ENCODE measurements at regions of chr22 and their contacts with region 1.

Region 1: DNA sequence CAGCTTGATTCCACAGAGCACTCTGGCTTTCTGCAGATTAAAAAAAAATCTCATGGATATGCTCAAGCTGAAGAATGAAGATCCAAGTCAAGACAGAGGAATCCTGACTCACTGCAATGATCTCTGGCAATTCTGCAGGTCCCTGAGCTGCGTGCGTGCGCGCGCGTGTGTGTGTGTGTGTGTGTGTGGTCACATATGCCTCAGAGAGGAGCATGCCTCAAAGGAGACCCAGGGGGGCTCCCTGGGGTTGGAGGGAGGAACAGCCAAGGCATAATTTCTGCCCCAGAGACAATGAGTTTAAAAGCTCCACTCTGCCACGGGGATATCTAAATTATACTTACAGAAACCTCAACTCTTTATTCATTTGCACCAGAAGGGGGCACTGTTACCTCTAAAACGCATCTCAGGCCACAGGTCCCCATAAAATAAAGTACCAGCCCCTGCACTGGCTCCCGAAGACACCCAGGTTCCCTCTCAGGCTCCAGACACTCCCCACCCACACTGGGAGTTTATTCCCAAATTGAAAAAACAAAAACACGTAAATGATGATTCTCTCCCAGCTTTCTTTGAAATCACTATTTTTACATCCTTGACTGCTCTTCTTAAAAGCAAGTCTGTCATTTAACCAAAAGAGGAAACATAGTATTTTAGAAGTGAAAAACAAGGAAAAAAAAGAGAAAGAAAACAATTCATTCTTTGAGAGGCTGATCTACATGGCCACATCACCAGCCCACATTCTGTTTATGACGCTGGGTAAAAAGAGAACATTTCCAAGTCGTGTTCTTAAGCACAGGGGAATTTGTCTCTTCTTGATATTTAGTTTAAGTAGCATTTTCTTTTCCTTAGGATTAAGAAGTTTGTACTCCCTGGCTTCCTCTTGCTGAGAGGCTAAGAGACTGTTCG is 401.0 kb downstream of the LARGE1 start:
- DNase-seq: peak; percentile 23
- ATAC-seq: no peak
- H3K4me3 Mint-ChIP-seq: no peak overlapping the region
- H3K27ac Mint-ChIP-seq: no peak overlapping the region
- H3K4me1 Mint-ChIP-seq: no peaks in the 10 kb centered on the region
- H3K27me3 Mint-ChIP-seq: no peaks in the 10 kb centered on the region

Region 2: GRCh38 chr22:33504941-33505625 is 14.2 kb before region 1 on chr22:
- CTCF ChIA-PET with region 1: no interaction called
- POLR2A ChIA-PET with region 1: no interaction called
- DNase-seq: no peak
- ATAC-seq: no peak
- H3K4me3 Mint-ChIP-seq: no peak overlapping the region
- H3K27ac Mint-ChIP-seq: no peak overlapping the region
- H3K4me1 Mint-ChIP-seq: no peaks in the 10 kb centered on the region
- H3K27me3 Mint-ChIP-seq: no peaks in the 10 kb centered on the region

Region 3: DNA sequence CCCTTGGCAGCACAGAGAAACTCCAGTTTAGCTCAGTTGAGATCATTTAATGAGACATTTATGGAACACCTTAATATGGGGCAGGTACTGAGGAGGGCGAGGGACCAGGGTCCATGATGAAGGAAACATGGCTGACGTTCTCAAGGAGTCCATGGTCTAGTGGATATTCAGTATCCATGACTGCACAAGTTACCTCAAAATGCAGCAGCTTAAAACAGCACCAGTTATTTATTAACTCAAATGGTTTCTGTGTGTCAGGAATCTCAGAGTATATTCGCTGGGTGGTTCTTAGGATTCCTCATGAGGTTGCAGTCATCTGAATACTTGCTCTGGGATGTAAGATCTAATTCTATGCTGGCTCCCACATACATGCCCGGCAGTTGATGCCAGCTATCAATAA is 54.2 kb after region 1 on chr22:
- CTCF ChIA-PET with region 1: interaction called, 20 read pairs
- POLR2A ChIA-PET with region 1: no interaction called
- DNase-seq: no peak
- ATAC-seq: no peak
- H3K4me3 Mint-ChIP-seq: no peak overlapping the region
- H3K27ac Mint-ChIP-seq: no peak overlapping the region
- H3K4me1 Mint-ChIP-seq: peaks cover 6% of the 10 kb centered on the region
- H3K27me3 Mint-ChIP-seq: no peaks in the 10 kb centered on the region

Region 4: DNA sequence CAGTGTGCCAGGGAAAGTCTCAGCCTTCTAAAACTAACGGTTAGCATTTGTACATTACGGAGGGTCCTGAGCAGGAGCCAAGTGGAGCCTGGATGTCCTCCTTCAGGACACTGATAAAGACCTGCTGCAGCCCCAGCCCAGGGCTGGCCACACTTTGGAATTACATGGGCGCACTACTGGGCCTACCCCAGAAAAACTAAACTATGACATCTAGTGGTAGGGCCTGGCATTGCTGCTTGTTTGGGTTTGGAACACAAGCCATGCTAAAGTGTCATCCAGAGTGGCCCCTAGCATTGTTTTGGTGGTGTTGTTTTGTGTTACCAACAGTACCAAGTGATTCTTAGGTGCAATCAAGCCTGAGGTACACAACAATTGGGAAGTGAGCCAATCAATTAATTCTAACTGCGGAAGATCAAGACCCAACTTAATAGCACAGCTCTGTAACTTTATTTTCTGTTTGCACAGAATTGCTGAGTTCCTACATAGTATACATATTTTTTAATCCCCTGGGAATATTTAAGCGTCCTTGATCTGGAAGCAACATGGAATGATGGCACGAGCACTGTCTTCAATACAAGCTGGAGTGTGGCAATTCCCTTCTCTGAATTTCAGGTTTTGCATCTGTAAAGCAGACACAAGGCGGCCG is 60.2 kb after region 1 on chr22:
- CTCF ChIA-PET with region 1: interaction called, 20 read pairs
- POLR2A ChIA-PET with region 1: no interaction called
- DNase-seq: peak; percentile 51
- ATAC-seq: no peak
- H3K4me3 Mint-ChIP-seq: no peak overlapping the region
- H3K27ac Mint-ChIP-seq: no peak overlapping the region
- H3K4me1 Mint-ChIP-seq: no peaks in the 10 kb centered on the region
- H3K27me3 Mint-ChIP-seq: no peaks in the 10 kb centered on the region

Measured in activated CD8-positive, alpha-beta T cell treated with anti-CD3 and anti-CD28 coated beads, Interleukin-2, amount 10 ng/mL, durations not matched to agents 7 days and 5 days (primary cell).